ENCODE measurements at regions of chr1 and their contacts with region 1.

Region 1: DNA sequence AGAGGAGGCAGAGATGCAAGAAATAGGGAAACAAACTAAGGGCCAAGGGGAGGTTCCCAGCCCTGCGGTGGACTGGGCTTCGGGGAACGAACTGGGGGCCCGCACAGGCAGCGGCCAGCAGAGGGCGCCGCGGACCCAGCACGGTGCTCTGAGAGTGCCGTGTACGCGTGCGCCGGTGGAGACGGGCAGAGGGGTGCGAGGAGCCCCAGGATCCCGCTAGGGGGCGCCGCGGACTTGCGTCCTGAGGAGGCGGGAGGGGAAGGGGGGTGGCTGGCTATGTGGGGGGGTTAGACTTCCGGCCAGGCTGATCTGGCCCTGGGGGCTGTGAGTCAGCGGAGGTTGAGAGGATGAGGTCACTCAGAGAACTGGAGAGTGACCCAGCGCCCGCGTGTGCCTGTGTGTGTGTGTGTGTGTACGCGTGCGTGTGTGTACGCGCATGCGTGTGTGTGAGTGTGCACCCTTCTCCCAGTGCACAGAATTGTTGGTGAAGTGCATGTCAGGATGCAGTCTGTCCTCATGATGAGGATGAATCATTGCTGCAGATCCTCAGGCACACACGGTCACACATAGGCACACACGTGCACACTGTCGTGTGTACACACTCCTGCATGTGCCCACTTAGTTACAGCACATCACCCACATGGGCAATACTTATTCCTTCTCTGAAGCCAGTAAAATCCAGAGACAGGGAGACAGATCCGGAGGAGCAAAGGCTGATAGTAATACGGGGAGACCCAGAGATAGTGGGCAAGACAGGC is 17.0 kb downstream of the NES start:
- DNase-seq: peak; percentile 77
- H3K4me3 ChIP-seq: no peak overlapping the region
- CTCF ChIP-seq: peak; percentile 100

Region 2: DNA sequence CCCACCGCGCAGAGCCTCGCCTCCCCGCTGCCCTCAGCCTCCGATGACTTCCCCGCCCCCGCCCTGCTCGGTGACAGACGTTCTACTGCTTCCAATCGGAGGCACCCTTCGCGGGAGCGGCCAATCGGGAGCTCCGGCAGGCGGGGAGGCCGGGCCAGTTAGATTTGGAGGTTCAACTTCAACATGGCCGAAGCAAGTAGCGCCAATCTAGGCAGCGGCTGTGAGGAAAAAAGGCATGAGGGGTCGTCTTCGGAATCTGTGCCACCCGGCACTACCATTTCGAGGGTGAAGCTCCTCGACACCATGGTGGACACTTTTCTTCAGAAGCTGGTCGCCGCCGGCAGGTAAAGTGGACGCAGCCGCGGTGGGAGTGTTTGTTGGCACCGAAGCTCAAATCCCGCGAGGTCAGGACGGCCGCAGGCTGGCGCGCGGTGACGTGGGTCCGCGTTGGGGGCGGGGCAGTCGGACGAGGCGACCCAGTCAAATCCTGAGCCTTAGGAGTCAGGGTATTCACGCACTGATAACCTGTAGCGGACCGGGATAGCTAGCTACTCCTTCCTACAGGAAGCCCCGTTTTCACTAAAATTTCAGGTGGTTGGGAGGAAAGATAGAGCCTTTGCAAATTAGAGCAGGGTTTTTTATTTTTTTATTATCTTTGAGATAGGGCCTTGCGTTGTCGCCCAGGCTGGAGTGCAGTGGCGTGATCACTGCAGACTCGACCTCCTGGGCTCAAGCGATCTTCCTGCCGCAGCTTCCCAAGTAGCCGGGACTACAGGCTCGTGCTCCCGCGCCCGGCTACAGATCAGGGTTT is 447.1 kb before region 1 on chr1 and contains the start of gene PMF1:
- CTCF ChIA-PET with region 1: no interaction called
- POLR2A ChIA-PET with region 1: no interaction called
- DNase-seq: peak; percentile 75
- H3K4me3 ChIP-seq: peak within 1 kb of the TSS; percentile 96
- CTCF ChIP-seq: no peak

Region 3: GRCh38 chr1:156524481-156524869 is 135.7 kb before region 1 on chr1:
- CTCF ChIA-PET with region 1: no interaction called
- POLR2A ChIA-PET with region 1: no interaction called
- DNase-seq: no peak
- H3K4me3 ChIP-seq: no peak overlapping the region
- CTCF ChIP-seq: no peak

Region 4: GRCh38 chr1:156591432-156592157 is 68.6 kb before region 1 on chr1 and contains the start of gene NAXE:
- CTCF ChIA-PET with region 1: interaction called, 16 read pairs
- POLR2A ChIA-PET with region 1: no interaction called
- DNase-seq: no peak
- H3K4me3 ChIP-seq: peak within 1 kb of the TSS; percentile 83
- CTCF ChIP-seq: no peak

Region 5: DNA sequence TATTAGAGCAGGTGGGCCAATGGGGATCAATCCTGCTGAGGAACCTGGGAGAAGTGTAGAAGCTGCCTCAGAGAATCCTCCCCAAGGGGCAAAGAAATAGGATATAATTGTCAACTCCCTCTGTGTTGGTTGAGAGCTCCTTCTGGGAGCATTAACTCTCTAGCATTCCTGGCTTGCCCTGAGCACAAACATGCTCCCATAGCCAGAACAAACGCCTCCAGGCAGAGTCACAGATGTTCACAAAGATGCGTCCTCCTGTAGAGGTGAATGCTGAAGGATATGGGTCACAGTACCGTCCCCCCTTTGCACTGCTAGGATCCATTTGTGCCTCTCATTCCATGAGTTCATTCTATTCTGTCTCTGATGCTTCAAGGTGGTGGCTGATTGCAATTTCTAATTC is 27.8 kb before region 1 on chr1:
- CTCF ChIA-PET with region 1: interaction called, 409 read pairs
- POLR2A ChIA-PET with region 1: no interaction called
- DNase-seq: no peak
- H3K4me3 ChIP-seq: no peak overlapping the region
- CTCF ChIP-seq: no peak

Region 6: DNA sequence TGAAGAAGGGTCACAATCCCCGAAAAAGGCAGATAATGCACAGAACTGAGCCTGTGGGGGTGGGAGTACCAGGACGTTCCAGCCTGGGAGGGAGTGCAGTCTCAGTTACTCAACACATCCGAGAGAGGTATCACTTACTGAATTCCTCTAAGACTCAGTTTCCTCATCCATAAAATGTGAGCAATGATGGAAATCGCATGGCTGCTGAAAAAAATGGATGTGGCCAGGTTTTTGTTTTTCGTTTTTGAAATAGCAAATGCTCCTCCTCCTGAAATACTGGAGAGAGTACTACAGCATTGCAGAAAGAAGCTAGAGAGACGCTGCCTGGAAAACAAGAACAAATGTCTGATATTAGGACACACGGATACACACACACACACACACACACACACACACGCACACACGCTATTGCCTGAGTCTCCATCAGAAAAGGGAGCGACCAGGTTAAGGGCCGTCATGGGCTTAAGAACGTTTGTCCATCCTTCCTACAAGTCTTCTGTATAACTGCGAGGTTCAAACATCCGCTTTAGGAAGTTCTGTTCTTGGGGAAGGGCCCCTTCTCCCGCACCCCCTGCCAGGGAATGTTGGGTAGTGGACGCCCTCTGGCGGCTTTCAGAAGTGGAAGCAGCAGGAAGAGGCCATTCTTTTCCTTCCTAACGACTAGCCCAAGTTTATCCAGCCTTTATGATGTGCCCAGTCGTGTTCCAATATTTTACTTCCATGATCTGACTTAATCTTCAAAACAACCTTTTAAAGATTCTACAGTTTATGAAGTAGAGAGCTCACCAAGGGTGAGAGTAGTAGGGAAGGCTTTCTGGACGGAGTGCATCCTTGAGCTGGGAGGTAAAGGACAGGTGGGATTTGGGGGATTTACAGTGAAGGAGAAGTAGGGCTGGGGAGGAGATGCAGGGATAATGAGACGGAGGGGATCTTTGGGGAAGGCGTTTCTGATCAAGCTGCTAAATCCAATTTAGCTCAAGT is 17.7 kb after region 1 on chr1:
- CTCF ChIA-PET with region 1: interaction called, 506 read pairs
- POLR2A ChIA-PET with region 1: interaction called, 14 read pairs
- DNase-seq: no peak
- H3K4me3 ChIP-seq: peak overlapping the region; percentile 39
- CTCF ChIP-seq: peak; percentile 92

Region 7: DNA sequence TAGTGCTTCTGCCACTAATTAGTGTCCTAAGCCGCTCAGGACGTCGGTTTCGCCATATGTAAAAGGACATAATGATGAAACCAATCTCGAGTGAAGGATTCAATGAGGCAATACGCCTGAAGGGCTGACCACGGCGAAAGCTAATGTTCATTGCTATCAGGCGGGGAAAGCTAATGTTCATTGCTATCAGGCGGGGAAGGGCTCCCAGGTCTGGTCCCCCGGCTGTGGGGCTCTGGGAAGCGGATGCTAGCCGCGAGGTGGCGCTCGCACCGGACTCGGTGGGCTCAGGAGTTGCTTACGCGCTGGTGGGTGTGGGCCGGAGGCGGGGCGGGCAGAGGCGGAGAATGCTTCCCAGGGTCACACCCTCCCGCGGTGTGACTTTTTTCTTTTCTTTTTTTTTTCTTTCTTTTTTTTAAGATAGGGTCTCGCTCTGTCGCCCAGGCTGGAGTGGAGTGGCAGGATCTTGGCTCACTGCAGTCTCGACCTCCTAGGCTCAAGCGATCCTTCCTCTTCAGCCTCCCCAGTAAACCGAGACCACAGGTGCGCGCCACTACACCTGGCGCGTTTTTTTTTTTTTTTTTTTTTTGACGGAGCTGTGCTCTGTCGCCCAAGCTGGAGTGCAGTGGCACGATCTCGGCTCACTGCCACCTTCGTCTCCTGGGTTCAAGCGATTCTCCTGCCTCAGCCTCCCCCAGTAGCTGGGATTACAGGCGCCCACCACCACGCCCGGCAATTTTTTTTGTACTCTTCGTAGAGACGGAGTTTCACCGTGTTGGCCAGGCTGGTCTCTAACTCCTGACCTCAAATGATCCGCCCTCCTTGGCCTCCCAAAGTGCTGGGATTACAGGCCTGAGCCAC is 232.2 kb after region 1 on chr1:
- CTCF ChIA-PET with region 1: interaction called, 35 read pairs
- POLR2A ChIA-PET with region 1: no interaction called
- DNase-seq: no peak
- H3K4me3 ChIP-seq: peak overlapping the region; percentile 30
- CTCF ChIP-seq: peak; percentile 97